B cell (primary cell): ENCODE measurements at regions of chr16 and their contacts with region 1.

Region 1: DNA sequence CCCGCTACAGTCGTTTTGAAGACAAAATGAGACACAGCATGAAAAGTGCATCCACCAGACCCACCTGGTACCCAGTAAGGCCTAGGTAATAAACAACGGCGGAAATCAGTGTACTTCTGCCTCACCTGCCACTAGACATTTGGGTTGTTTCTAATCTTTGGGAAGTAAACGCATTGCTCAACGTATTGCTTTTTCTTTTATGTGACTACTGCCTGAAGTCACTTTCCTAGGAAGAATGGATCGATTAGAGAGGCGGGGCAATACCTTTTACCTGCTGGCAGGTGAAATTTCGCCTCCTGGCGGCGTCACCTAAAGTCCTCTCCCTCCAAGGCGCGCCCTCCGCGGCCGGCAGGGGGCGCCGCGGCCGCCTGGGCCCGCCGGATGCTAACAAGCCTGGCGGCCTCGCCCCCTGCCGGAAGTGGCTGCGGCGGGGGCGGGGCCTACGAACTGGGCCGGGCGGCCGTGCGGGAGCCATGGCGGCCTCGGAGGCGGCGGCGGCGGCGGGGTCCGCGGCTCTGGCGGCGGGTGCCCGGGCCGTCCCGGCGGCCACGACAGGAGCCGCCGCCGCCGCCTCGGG is at the start of gene ATMIN:
- DNase-seq: peak; percentile 93
- ATAC-seq: peak; percentile 97
- H3K4me3 ChIP-seq: peak within 1 kb of the TSS; percentile 49 to 76 (median 66)
- H3K4me3 Mint-ChIP-seq: peak within 1 kb of the TSS; percentile 86
- H3K27ac ChIP-seq: peak within 1 kb of the TSS in 1 of 2 donors; percentile 40
- H3K27ac Mint-ChIP-seq: peak within 1 kb of the TSS; percentile 66
- H3K4me1 ChIP-seq: peaks cover 14 to 16% of the 10 kb centered on the region in 2 donors
- H3K4me1 Mint-ChIP-seq: peaks cover 22% of the 10 kb centered on the region
- H3K27me3 ChIP-seq: no peaks in the 10 kb centered on the region
- H3K27me3 Mint-ChIP-seq: no peaks in the 10 kb centered on the region
- CTCF ChIP-seq: peak; percentile 97
- total RNA-seq, gene ATMIN: 31.5 and 33.7 TPM in 2 replicates

Region 2: DNA sequence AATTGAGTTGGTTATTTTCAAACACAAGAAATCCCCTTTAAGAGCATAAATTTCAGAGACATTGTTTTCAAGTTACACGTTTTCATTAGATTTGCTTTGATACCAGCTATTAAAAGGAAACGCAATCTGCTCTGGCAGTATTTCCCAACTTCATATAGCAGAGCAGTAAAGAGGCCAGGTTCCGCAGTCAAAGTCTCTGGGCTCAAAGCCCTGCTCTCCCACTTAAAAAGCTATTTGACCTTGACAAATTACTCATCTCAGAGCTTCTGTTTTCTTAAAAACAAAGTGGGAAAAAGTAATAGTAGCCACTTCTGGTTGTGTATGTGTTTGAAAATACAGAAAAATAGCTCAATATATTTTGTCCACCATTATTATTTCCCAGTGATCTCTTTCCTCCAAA is 141.4 kb before region 1 on chr16:
- CTCF ChIA-PET with region 1: no interaction called
- POLR2A ChIA-PET with region 1: no interaction called
- intact Hi-C with region 1: no loop called
- DNase-seq: no peak
- ATAC-seq: no peak
- H3K4me3 ChIP-seq: no peak overlapping the region
- H3K4me3 Mint-ChIP-seq: no peak overlapping the region
- H3K27ac ChIP-seq: no peak overlapping the region
- H3K27ac Mint-ChIP-seq: no peak overlapping the region
- H3K4me1 ChIP-seq: peaks cover 0 to 9% of the 10 kb centered on the region in 2 donors
- H3K4me1 Mint-ChIP-seq: peaks cover 21% of the 10 kb centered on the region
- H3K27me3 ChIP-seq: no peaks in the 10 kb centered on the region
- H3K27me3 Mint-ChIP-seq: no peaks in the 10 kb centered on the region
- CTCF ChIP-seq: no peak

Region 3: GRCh38 chr16:81006814-81007696 is 28.4 kb before region 1 on chr16 and contains the starts of genes CENPN and CMC2:
- CTCF ChIA-PET with region 1: interaction called, 99 read pairs
- POLR2A ChIA-PET with region 1: interaction called, 6 read pairs
- intact Hi-C with region 1: loop called (anchors 1 kb)
- DNase-seq: peak; percentile 100
- ATAC-seq: peak; percentile 82
- H3K4me3 ChIP-seq: peak within 1 kb of the TSS; percentile 89 to 97 (median 94)
- H3K4me3 Mint-ChIP-seq: peak within 1 kb of the TSS; percentile 99
- H3K27ac ChIP-seq: peak within 1 kb of the TSS; percentile 97 to 99
- H3K27ac Mint-ChIP-seq: peak within 1 kb of the TSS; percentile 100
- H3K4me1 ChIP-seq: peaks cover 25 to 38% of the 10 kb centered on the region in 2 donors
- H3K4me1 Mint-ChIP-seq: peaks cover 42% of the 10 kb centered on the region
- H3K27me3 ChIP-seq: no peaks in the 10 kb centered on the region
- H3K27me3 Mint-ChIP-seq: no peaks in the 10 kb centered on the region
- CTCF ChIP-seq: no peak
- total RNA-seq, gene CENPN: 3.5 and 4.0 TPM in 2 replicates
- total RNA-seq, gene CMC2: 21.4 and 25.7 TPM in 2 replicates

Region 4: GRCh38 chr16:81018496-81018895 is 17.0 kb before region 1 on chr16:
- CTCF ChIA-PET with region 1: interaction called, 11 read pairs
- POLR2A ChIA-PET with region 1: no interaction called
- intact Hi-C with region 1: no loop called
- DNase-seq: no peak
- ATAC-seq: no peak
- H3K4me3 ChIP-seq: no peak overlapping the region
- H3K4me3 Mint-ChIP-seq: no peak overlapping the region
- H3K27ac ChIP-seq: no peak overlapping the region
- H3K27ac Mint-ChIP-seq: no peak overlapping the region
- H3K4me1 ChIP-seq: no peaks in the 10 kb centered on the region
- H3K4me1 Mint-ChIP-seq: no peaks in the 10 kb centered on the region
- H3K27me3 ChIP-seq: no peaks in the 10 kb centered on the region
- H3K27me3 Mint-ChIP-seq: no peaks in the 10 kb centered on the region
- CTCF ChIP-seq: no peak

Region 5: DNA sequence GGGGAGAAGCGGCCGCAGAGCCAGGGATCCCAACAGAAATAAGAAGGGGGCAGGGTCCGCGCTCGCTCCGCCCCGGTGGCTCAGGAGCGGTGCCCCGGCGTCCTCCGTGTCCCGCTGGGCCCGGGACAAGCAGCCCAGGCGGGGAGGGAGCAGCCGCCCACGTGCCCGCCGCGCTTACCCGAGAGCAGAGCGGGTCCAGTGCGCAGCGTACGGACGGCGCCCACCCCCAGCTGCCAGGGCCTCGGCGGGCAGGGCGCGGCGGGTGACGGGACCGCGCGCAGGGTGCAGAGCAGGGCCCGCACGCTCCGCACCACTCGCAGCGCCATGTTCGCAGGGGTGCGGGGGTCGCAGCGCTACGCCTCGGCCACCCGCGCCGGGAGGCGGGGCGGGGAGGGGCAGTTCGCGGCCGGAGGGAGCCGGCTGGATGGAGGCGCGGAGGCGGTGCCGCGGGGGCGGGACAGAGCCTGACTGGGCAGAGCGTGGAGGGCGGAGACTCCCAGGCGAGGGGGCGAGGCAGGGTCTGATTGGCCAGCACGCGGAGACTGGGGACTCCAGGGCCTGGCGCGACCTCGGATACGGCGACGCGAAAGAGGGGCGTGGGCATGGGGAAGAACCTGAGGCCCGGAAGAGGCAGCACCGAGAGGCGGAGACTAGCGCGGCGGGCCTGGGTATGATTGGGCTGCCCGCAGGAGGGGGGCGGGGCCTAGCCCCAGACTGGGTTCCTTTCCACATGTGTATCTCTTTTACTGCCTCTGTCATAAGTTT is 60.6 kb after region 1 on chr16 and contains the start of gene GCSH:
- CTCF ChIA-PET with region 1: interaction called, 4 read pairs
- POLR2A ChIA-PET with region 1: no interaction called
- intact Hi-C with region 1: loop called (anchors 1 kb)
- DNase-seq: peak; percentile 99
- ATAC-seq: peak; percentile 98
- H3K4me3 ChIP-seq: peak within 1 kb of the TSS; percentile 50 to 74 (median 65)
- H3K4me3 Mint-ChIP-seq: peak within 1 kb of the TSS; percentile 84
- H3K27ac ChIP-seq: peak within 1 kb of the TSS in 1 of 2 donors; percentile 62
- H3K27ac Mint-ChIP-seq: peak within 1 kb of the TSS; percentile 0
- H3K4me1 ChIP-seq: peaks cover 7 to 11% of the 10 kb centered on the region in 2 donors
- H3K4me1 Mint-ChIP-seq: peaks cover 11% of the 10 kb centered on the region
- H3K27me3 ChIP-seq: no peaks in the 10 kb centered on the region
- H3K27me3 Mint-ChIP-seq: no peaks in the 10 kb centered on the region
- CTCF ChIP-seq: no peak
- total RNA-seq, gene GCSH: 4.5 and 6.2 TPM in 2 replicates

Region 6: GRCh38 chr16:81314603-81315270 is 279.3 kb after region 1 on chr16 and contains the start of gene GAN:
- CTCF ChIA-PET with region 1: no interaction called
- POLR2A ChIA-PET with region 1: no interaction called
- intact Hi-C with region 1: loop called (anchors 10 kb)
- DNase-seq: peak; percentile 96
- ATAC-seq: peak; percentile 94
- H3K4me3 ChIP-seq: peak within 1 kb of the TSS; percentile 66 to 94 (median 79)
- H3K4me3 Mint-ChIP-seq: peak within 1 kb of the TSS; percentile 95
- H3K27ac ChIP-seq: peak within 1 kb of the TSS; percentile 30 to 76
- H3K27ac Mint-ChIP-seq: peak within 1 kb of the TSS; percentile 95
- H3K4me1 ChIP-seq: peaks cover 16 to 18% of the 10 kb centered on the region in 2 donors
- H3K4me1 Mint-ChIP-seq: peaks cover 32% of the 10 kb centered on the region
- H3K27me3 ChIP-seq: no peaks in the 10 kb centered on the region
- H3K27me3 Mint-ChIP-seq: no peaks in the 10 kb centered on the region
- CTCF ChIP-seq: no peak
- total RNA-seq, gene GAN: 6.9 and 11.6 TPM in 2 replicates